ENCODE measurements at regions of chr17 and their contacts with region 1.

Region 1: GRCh38 chr17:45135192-45135977 is at the start of gene ACBD4:
- DNase-seq: peak; percentile 97
- ATAC-seq: peak; percentile 76
- H3K4me3 Mint-ChIP-seq: peak within 1 kb of the TSS; percentile 72
- H3K27ac Mint-ChIP-seq: no peak within 1 kb of the TSS
- H3K4me1 Mint-ChIP-seq: peaks cover 14% of the 10 kb centered on the region; the same call in 1 of the 2 replicates
- H3K27me3 Mint-ChIP-seq: no peaks in the 10 kb centered on the region; the same call in 1 of the 2 replicates
- CTCF ChIP-seq: peak; percentile 100
- total RNA-seq, gene ACBD4: 12.7 to 21.0 TPM (median 21.0 TPM) in 3 replicates

Region 2: DNA sequence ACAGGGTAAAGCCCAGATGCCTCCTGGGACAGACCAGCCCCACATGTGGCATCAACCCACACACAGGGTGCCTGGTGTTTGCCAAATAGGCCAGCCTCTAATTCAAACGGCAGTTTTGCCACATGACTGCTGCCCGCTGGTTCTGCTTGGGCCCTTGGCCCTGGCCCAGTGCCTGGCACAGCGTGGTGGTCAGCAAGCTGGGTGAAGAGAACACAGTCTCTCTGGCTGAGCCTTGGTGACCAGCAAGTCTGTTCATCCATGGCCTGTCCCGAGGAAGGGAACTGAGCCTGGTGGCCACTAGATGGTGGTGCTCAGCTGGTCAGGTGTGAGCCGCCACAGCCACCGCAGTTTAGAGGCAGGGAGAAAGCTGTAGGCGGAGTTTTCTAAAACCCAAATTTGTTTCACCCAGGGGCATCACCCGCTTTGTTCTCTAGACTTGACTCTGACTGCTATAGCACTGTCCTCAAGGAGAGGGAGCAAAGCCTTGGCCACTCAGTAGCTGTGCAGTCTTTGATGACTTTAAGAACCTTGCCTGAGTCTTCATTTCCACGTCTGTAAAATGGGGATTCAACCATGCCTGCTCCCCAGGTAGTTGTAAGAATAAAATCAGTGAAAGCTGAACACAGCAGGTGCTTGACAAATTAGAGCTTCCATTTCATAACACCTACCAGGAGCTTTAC is 215.4 kb before region 1 on chr17:
- CTCF ChIA-PET with region 1: interaction called, 28 read pairs
- POLR2A ChIA-PET with region 1: no interaction called
- DNase-seq: peak; percentile 81
- ATAC-seq: peak; percentile 84
- H3K4me3 Mint-ChIP-seq: no peak overlapping the region
- H3K27ac Mint-ChIP-seq: peak overlapping the region; percentile 32; the same call in 1 of the 2 replicates
- H3K4me1 Mint-ChIP-seq: peaks cover 20% of the 10 kb centered on the region
- H3K27me3 Mint-ChIP-seq: peaks cover under 1% of the 10 kb centered on the region; the same call in 1 of the 2 replicates
- CTCF ChIP-seq: no peak; the same call in 1 of the 2 replicates

Region 3: GRCh38 chr17:45021607-45022287 is 113.6 kb before region 1 on chr17:
- CTCF ChIA-PET with region 1: interaction called, 31 read pairs
- POLR2A ChIA-PET with region 1: no interaction called
- DNase-seq: peak; percentile 72
- ATAC-seq: peak; percentile 62
- H3K4me3 Mint-ChIP-seq: peak overlapping the region; percentile 66
- H3K27ac Mint-ChIP-seq: no peak overlapping the region
- H3K4me1 Mint-ChIP-seq: peaks cover 28% of the 10 kb centered on the region
- H3K27me3 Mint-ChIP-seq: peaks cover 42% of the 10 kb centered on the region
- CTCF ChIP-seq: peak; percentile 85

Region 4: GRCh38 chr17:45098869-45099616 is 36.3 kb before region 1 on chr17:
- CTCF ChIA-PET with region 1: interaction called, 26 read pairs
- POLR2A ChIA-PET with region 1: no interaction called
- DNase-seq: peak; percentile 94
- ATAC-seq: peak; percentile 96
- H3K4me3 Mint-ChIP-seq: no peak overlapping the region
- H3K27ac Mint-ChIP-seq: peak overlapping the region; percentile 87
- H3K4me1 Mint-ChIP-seq: no peaks in the 10 kb centered on the region
- H3K27me3 Mint-ChIP-seq: no peaks in the 10 kb centered on the region
- CTCF ChIP-seq: peak; percentile 82

Region 5: GRCh38 chr17:45148183-45149036 is 13.0 kb after region 1 on chr17 and contains the start of gene HEXIM1:
- CTCF ChIA-PET with region 1: interaction called, 531 read pairs
- POLR2A ChIA-PET with region 1: interaction called, 39 read pairs
- DNase-seq: peak; percentile 99
- ATAC-seq: peak; percentile 75
- H3K4me3 Mint-ChIP-seq: peak within 1 kb of the TSS; percentile 98
- H3K27ac Mint-ChIP-seq: peak within 1 kb of the TSS; percentile 100
- H3K4me1 Mint-ChIP-seq: peaks cover 34% of the 10 kb centered on the region
- H3K27me3 Mint-ChIP-seq: peaks cover 5% of the 10 kb centered on the region; the same call in 1 of the 2 replicates
- CTCF ChIP-seq: no peak
- total RNA-seq, gene HEXIM1: 29.6 to 36.9 TPM (median 35.2 TPM) in 3 replicates

Region 6: GRCh38 chr17:45190503-45191255 is 55.3 kb after region 1 on chr17:
- CTCF ChIA-PET with region 1: interaction called, 19 read pairs
- POLR2A ChIA-PET with region 1: no interaction called
- DNase-seq: no peak
- ATAC-seq: no peak
- H3K4me3 Mint-ChIP-seq: no peak overlapping the region
- H3K27ac Mint-ChIP-seq: no peak overlapping the region
- H3K4me1 Mint-ChIP-seq: no peaks in the 10 kb centered on the region
- H3K27me3 Mint-ChIP-seq: no peaks in the 10 kb centered on the region
- CTCF ChIP-seq: no peak

Region 7: DNA sequence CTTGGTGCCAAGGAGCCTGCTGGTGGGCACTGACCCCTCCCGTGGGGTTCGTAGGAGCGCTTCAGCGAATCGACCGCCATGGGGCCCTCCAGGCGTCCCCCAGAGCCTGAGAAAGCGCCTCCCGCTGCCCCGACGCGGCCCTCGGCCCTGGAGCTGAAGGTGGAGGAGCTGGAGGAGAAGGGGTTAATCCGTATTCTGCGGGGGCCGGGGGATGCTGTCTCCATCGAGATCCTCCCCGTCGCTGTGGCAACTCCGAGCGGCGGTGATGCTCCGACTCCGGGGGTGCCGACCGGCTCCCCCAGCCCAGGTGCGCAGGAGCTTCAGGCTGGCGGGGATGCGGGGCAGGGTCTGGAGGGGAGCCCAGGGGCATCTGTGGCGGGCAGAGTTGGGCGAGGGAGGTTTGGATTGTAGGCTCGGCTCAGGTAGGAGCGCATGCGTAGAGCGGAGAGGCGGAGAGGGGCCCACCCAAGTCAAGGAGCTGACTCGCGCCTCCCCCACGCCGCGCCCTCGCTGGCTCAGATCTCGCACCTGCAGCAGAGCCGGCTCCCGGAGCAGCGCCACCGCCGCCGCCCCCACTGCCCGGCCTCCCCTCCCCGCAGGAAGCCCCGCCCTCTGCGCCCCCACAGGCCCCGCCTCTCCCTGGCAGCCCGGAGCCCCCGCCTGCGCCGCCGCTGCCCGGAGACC is 106.1 kb after region 1 on chr17:
- CTCF ChIA-PET with region 1: interaction called, 110 read pairs
- POLR2A ChIA-PET with region 1: no interaction called
- DNase-seq: peak; percentile 79
- ATAC-seq: peak; percentile 55
- H3K4me3 Mint-ChIP-seq: peak overlapping the region; percentile 77
- H3K27ac Mint-ChIP-seq: no peak overlapping the region
- H3K4me1 Mint-ChIP-seq: peaks cover 12% of the 10 kb centered on the region
- H3K27me3 Mint-ChIP-seq: peaks cover 48% of the 10 kb centered on the region
- CTCF ChIP-seq: no peak

Region 8: DNA sequence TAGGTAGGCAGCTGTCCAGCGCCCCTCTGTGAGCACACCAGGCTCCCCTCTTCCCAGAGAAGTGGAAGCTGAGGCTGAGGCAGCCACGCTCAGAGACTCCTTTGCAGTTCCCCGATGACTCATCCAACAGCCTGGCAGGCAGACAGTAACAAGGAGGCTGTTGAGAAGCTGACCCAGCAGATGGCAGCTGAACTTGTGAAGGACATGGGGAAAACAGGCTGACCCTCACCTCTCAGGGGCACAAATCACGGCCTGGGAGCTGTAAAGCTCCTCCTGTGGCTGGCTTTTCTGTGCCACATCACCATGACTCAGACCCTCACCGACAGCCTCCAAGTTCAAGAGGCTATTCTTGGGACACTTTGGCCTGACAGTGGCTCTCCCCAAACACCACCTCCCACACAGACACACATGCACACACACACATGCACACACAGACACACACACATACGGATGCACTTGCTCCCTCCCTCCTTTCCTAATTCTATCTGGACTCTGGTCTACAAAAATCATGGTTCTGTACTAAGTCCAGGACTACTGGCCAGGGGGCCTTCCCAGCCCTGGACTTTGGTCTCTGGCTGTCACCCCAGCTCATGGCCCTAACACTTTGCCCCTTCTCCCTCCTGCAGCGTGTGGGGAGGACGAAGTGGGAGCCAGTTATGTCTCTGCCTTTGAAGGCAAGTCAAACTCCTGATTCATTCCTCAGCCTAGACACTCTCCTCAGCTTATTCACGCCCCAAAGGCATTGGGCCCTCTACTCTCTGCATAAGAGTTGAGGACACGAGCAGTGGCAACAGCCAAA is 158.2 kb after region 1 on chr17:
- CTCF ChIA-PET with region 1: no interaction called
- POLR2A ChIA-PET with region 1: no interaction called
- DNase-seq: no peak
- ATAC-seq: no peak
- H3K4me3 Mint-ChIP-seq: no peak overlapping the region
- H3K27ac Mint-ChIP-seq: no peak overlapping the region
- H3K4me1 Mint-ChIP-seq: no peaks in the 10 kb centered on the region
- H3K27me3 Mint-ChIP-seq: no peaks in the 10 kb centered on the region
- CTCF ChIP-seq: no peak